ENCODE measurements at regions of chr16 and their contacts with region 1.

Region 1: DNA sequence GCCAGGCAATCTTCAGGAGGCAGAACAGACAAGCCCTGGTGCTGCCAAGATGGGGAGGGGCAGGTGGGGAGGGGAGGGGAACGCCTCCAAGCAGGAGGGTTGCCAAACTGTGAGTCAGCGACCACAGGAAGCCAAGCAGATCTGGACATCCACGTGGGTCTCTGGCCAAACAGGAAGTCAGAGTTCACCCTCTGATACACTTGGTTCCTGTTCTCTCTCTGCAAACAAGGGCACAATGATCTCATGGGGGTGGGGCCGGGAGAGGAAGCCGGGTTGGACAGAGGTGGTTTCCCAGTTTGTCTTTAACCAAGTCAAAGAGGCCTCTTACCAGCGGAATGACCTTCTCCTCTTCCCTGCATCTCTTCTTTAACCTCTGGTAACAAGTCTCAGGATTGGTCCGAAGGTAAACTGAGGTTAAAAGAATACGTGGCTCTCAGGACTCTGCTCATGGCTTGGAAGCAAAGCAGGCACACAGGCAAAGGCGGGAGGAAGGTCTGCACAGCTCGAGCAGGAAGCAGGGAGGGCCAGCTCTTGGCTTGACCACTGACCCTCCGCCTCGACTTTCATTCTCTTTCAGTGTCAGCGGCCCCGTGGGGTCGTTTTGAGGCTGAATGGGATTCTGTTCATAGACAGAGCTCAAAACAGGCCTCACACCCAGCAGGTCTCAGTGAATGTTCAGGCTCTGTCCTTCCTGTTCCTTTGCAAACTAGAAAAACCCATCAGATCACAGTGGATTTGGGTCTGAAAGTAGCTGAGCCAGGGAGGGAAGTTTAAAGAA is 32.9 kb downstream of the TK2 start:
- DNase-seq: peak; percentile 77 to 97 (median 91)

Region 2: DNA sequence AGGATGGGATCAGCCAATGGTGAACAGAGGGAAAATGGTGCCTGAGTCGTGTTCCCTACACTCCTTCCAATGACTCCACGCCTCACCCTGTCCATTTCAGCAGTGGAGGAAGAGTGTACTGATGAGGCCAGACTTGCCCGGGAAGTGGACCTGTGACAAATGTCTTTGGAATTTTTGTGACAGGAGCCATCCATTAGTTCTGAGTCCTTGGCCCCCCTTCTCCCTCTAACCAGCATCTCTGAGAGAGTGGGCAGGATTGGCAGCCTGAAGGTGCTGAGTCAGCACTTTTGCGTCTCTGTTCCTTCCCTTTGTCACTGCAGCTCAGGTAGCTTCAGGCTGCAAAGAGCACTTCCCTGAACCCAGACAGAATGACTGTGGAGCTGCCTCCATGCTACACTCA is 59.1 kb before region 1 on chr16:
- intact Hi-C with region 1: no loop called
- DNase-seq: peak in 1 of 10 donors; percentile 15

Region 3: DNA sequence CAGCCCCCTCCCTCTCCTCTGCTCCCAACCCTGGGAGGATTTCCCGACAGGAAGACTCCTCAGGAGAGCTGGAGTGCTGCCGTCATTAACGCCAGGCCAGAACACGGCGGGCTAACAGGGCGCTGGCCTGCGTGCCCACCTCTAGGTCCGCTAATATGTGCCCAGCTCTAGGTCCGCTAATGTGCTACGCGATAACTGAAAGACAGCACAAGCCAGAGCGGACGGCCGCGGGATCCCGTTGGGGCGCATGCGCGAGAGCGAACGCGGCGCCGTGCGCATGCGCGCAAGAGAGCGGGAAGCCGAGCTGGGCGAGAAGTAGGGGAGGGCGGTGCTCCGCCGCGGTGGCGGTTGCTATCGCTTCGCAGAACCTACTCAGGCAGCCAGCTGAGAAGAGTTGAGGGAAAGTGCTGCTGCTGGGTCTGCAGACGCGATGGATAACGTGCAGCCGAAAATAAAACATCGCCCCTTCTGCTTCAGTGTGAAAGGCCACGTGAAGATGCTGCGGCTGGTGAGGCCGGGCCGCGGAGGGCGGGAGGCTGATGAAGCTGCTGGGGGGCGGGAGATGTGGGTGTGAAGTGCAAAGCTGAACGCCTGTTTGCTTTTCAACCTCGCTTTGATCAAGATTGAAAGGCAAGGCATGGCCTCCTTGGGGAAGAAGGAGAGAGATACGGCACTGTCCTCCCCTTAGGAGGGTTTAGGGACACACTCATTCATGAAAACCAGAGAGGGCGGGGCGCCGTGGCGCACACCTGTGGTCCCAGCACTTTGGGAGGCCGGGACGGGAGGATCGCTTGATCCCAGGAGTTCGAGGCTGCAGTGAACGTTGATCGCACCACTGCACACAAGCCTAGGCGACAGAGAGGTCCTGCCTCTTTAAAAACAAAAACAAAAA is 35.5 kb after region 1 on chr16 and contains the start of gene CKLF:
- intact Hi-C with region 1: loop called (anchors 2 kb)
- DNase-seq: peak; percentile 80 to 98 (median 86)

Region 4: GRCh38 chr16:66608241-66609138 is 91.5 kb after region 1 on chr16:
- intact Hi-C with region 1: loop called (anchors 10 kb)
- DNase-seq: peak; percentile 59 to 97 (median 87)

Region 5: GRCh38 chr16:66751303-66751991 is 234.4 kb after region 1 on chr16 and contains the start of gene DYNC1LI2:
- intact Hi-C with region 1: no loop called
- DNase-seq: peak; percentile 63 to 97 (median 78)